Activated CD8-positive, alpha-beta T cell treated with anti-CD3 and anti-CD28 coated beads for 36 hours (primary cell): ENCODE measurements at regions of chr11 and their contacts with region 1.

Region 1: DNA sequence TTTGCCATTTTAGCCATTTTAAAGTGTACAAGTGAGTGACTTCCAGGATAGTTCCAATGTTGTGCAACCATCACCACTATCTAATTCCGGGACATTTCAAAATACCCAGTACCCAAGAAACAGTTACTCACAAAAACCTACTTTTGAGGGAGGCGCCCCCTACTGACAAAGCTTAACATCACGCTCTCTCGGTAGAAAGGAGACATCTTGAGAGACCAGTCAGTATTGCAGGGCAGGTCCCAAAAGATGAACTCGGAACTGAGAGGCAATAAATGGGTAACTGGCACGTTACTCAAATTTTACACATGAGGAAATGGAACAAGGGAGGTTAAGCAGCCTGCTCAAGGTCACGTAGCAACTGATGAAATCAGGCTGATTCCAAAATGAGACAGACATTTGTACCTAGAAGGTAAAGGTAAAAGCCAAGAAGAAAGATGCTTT is 50.0 kb upstream of the POU2AF1 start:
- DNase-seq: peak; percentile 84
- ATAC-seq: peak; percentile 88
- H3K4me3 Mint-ChIP-seq: no peak overlapping the region
- H3K27ac Mint-ChIP-seq: no peak overlapping the region
- H3K4me1 Mint-ChIP-seq: no peaks in the 10 kb centered on the region
- H3K27me3 Mint-ChIP-seq: peaks cover 2% of the 10 kb centered on the region
- CTCF ChIP-seq: peak; percentile 92

Region 2: GRCh38 chr11:110928391-110928790 is 500.7 kb before region 1 on chr11:
- CTCF ChIA-PET with region 1: no interaction called
- POLR2A ChIA-PET with region 1: no interaction called
- intact Hi-C with region 1: no loop called
- DNase-seq: no peak
- ATAC-seq: no peak
- H3K4me3 Mint-ChIP-seq: no peak overlapping the region
- H3K27ac Mint-ChIP-seq: no peak overlapping the region
- H3K4me1 Mint-ChIP-seq: no peaks in the 10 kb centered on the region
- H3K27me3 Mint-ChIP-seq: no peaks in the 10 kb centered on the region
- CTCF ChIP-seq: no peak

Region 3: GRCh38 chr11:111327908-111328624 is 101.0 kb before region 1 on chr11:
- CTCF ChIA-PET with region 1: interaction called, 12 read pairs
- POLR2A ChIA-PET with region 1: no interaction called
- intact Hi-C with region 1: no loop called
- DNase-seq: no peak
- ATAC-seq: peak; percentile 10
- H3K4me3 Mint-ChIP-seq: no peak overlapping the region
- H3K27ac Mint-ChIP-seq: no peak overlapping the region
- H3K4me1 Mint-ChIP-seq: peaks cover 2% of the 10 kb centered on the region
- H3K27me3 Mint-ChIP-seq: no peaks in the 10 kb centered on the region
- CTCF ChIP-seq: no peak

Region 4: DNA sequence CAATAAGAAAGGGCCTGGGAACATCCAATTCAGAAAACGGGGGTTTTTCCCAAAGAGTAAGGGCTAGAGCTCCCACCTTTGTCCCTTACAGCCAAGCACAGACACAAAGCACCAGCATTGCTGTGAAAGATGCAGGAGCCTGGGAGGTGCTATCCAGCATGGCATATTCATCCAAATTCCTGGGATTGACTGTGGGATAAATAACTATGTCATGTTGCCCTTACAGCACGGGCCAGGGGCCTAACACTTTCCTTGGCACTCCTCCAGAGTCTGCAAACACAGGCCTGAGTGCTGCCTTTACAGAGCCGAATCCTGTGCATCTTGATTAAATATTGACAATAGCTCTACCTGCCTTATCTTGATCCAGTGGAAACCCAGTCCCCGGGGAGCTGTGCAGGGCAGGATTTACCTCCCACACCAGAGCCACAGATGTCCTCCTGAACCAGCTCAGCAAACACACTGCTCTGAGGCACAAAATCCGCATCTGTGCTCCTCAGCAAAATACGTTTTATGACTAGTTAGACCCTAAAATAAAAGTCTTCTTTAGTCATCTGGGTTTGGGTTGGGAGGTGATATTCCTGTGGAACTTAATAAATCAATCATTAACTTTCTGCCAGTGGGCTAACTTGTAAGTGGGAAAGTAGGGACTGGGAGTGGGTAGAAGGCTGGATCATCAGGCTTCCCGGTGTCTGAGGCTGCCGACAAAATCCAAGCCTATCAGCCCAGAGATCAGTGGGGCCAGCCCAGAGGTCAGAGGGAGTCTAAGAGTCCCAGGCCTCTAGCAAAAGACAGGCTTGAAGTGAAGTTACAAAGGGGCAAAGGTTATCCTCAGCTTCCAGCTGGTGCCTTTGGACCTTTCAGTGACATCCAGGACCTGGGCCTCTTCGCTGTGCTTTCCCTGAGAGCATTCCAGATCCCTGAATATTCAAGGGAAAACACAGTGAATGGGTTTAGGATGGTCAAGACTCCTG is 94.3 kb before region 1 on chr11:
- CTCF ChIA-PET with region 1: interaction called, 12 read pairs
- POLR2A ChIA-PET with region 1: no interaction called
- intact Hi-C with region 1: no loop called
- DNase-seq: no peak
- ATAC-seq: no peak
- H3K4me3 Mint-ChIP-seq: no peak overlapping the region
- H3K27ac Mint-ChIP-seq: no peak overlapping the region
- H3K4me1 Mint-ChIP-seq: no peaks in the 10 kb centered on the region
- H3K27me3 Mint-ChIP-seq: no peaks in the 10 kb centered on the region
- CTCF ChIP-seq: no peak

Region 5: DNA sequence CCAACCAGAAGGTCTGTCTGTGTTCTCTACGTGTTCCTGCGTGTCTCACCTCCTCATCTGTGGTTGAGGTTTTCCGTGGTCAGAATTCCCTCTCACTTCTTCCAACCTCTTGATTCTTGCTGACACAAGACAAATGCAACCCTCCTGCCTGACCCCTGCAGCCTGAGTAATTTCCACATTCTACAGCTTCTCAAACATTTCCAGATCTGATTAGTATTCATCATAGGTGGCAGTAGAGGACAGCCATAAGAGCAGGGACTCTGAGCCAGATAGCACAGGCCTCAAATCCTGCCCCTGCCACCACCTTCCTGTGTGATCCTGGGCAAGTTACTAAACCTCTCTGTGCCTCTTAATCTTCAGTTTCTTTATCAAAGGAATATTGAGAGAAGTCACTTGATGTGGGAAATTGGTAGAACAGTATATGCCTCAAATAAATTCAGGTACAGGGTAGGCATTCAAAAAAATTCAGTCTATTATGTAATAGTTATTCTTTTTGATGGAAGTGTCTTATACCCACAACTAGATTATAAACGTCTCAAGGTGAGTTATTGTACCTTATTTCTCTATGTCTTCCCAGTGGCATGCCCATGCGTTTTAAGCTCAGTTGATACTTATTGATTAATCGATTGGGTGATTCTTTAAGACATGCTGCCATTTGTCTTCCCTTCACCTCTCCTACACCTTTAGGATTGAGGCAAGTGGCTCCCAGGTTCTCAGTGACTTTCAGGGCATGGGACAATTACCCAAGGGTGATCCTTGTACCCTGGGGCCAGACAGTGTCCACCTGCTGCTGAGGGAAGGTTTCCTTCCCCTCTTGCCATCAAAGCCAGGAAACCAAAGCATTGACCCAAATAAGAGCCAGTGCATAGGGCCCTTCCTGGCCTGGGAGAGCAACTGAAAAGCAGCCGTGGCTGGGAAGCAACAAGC is 69.6 kb before region 1 on chr11:
- CTCF ChIA-PET with region 1: interaction called, 32 read pairs
- POLR2A ChIA-PET with region 1: no interaction called
- intact Hi-C with region 1: loop called (anchors 5 kb)
- DNase-seq: peak; percentile 26
- ATAC-seq: peak; percentile 81
- H3K4me3 Mint-ChIP-seq: no peak overlapping the region
- H3K27ac Mint-ChIP-seq: no peak overlapping the region
- H3K4me1 Mint-ChIP-seq: no peaks in the 10 kb centered on the region
- H3K27me3 Mint-ChIP-seq: no peaks in the 10 kb centered on the region
- CTCF ChIP-seq: no peak

Region 6: DNA sequence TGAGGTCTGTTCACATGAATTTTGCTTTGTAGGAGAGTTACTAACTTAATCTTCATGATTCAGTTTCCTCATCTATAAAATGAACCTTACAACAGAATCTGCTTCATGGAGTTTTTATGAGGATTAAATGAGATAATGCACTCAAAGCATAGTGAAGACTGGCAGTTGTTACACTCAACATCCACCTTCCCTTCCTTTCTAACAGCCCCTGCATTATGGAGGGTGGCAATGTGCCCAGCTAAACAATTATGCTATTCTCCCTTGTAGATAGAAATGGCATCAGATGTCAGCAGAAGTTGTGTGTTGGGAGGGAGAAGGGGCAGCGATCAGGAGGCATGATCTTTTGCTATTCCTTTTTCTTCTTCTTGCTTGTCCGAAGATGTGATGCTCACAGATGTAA is 56.5 kb before region 1 on chr11:
- CTCF ChIA-PET with region 1: interaction called, 10 read pairs
- POLR2A ChIA-PET with region 1: no interaction called
- intact Hi-C with region 1: no loop called
- DNase-seq: no peak
- ATAC-seq: no peak
- H3K4me3 Mint-ChIP-seq: no peak overlapping the region
- H3K27ac Mint-ChIP-seq: peak overlapping the region; percentile 44
- H3K4me1 Mint-ChIP-seq: peaks cover 42% of the 10 kb centered on the region
- H3K27me3 Mint-ChIP-seq: no peaks in the 10 kb centered on the region
- CTCF ChIP-seq: no peak

Region 7: DNA sequence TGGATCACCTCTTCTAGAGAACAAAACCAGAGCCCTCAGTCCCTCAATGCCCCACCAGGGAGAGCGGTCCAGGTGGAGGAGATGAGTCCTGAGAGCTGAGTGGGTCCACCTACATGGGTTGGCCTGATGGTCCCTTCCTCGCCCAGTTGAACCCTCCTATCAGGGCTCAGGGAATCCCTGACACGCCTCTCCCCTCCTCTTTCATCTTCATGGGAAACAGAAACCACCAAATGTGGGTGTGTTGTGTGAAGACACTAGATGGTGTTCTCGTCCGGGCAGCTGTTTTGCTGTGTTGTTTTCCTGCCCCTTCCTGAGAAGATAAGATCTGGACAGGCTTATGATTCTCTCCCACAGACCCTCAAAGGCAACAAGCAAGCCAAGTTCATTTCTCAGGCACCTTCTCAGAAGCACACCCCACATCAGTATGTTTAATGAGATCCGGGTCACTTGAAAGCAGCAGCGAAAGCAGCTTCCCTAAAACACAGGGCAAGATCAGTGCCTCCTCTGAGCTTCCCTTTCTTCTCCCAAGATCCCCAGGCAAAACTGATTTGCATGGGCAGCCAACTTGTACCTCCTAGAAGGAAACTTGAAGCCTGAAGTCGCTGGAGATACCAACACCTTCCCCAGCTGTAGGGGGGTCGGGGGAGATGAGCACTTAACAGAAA is 14.7 kb before region 1 on chr11:
- CTCF ChIA-PET with region 1: interaction called, 54 read pairs
- POLR2A ChIA-PET with region 1: interaction called, 3 read pairs
- intact Hi-C with region 1: no loop called
- DNase-seq: peak; percentile 31
- ATAC-seq: peak; percentile 25
- H3K4me3 Mint-ChIP-seq: peak overlapping the region; percentile 7
- H3K27ac Mint-ChIP-seq: peak overlapping the region; percentile 77
- H3K4me1 Mint-ChIP-seq: peaks cover 51% of the 10 kb centered on the region
- H3K27me3 Mint-ChIP-seq: no peaks in the 10 kb centered on the region
- CTCF ChIP-seq: no peak

Region 8: DNA sequence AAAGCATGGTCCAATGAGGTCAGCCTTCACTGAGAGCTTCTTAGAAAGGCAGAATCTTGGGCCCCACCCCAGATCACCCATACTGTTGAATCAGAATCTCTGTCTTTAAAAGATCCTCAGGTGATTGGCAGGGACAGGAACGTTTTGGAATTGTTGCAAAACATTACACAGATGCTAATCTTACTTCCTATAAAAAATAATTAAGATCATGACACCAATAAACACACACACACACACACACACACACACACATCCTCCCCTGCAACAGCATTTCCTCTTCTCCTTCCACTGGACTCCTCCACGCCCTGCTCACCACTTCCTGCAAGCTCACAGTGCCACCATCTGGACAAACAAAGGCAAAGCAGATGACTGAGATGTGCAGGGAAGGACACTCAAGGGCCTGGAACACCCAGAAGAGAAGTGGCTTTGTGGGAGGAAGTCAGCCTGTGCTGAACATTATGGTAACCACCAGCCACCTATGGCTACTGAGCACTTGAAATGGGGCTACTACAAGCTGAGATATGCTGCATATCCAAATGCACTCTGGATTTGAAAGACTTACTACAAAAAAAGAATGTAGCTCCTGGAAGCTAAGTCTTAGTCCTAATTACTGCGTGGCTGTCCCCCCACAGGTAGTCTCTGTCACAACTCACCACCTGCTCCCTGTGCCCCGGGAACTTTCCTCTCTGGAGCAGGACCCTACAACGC is 17.5 kb after region 1 on chr11:
- CTCF ChIA-PET with region 1: interaction called, 78 read pairs
- POLR2A ChIA-PET with region 1: no interaction called
- intact Hi-C with region 1: no loop called
- DNase-seq: peak; percentile 80
- ATAC-seq: peak; percentile 100
- H3K4me3 Mint-ChIP-seq: no peak overlapping the region
- H3K27ac Mint-ChIP-seq: peak overlapping the region; percentile 9
- H3K4me1 Mint-ChIP-seq: peaks cover 15% of the 10 kb centered on the region
- H3K27me3 Mint-ChIP-seq: no peaks in the 10 kb centered on the region
- CTCF ChIP-seq: peak; percentile 67

Region 9: GRCh38 chr11:111465400-111465799 is 36.3 kb after region 1 on chr11:
- CTCF ChIA-PET with region 1: no interaction called
- POLR2A ChIA-PET with region 1: no interaction called
- intact Hi-C with region 1: no loop called
- DNase-seq: no peak
- ATAC-seq: no peak
- H3K4me3 Mint-ChIP-seq: no peak overlapping the region
- H3K27ac Mint-ChIP-seq: no peak overlapping the region
- H3K4me1 Mint-ChIP-seq: peaks cover 13% of the 10 kb centered on the region
- H3K27me3 Mint-ChIP-seq: peaks cover 6% of the 10 kb centered on the region
- CTCF ChIP-seq: no peak

Region 10: DNA sequence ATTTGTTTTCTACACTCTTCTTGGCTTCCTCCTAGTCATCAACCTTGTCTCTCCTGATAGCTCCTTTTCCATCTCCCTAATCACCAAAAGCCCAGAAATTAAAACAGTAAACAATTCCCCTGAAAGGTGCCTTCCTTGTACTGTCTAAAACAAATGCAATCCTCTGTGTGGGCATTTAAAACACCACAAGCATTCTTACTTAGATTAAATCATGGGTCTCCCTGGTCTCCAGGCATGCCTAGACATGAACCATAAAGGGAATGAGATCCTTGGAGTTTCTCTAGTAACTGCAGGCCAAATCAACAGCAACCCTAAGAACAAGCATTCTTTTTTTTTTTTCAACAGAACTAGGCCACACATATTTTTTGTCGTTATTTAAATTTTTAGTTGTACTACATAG is 81.2 kb after region 1 on chr11:
- CTCF ChIA-PET with region 1: no interaction called
- POLR2A ChIA-PET with region 1: no interaction called
- intact Hi-C with region 1: no loop called
- DNase-seq: no peak
- ATAC-seq: no peak
- H3K4me3 Mint-ChIP-seq: no peak overlapping the region
- H3K27ac Mint-ChIP-seq: no peak overlapping the region
- H3K4me1 Mint-ChIP-seq: peaks cover 14% of the 10 kb centered on the region
- H3K27me3 Mint-ChIP-seq: peaks cover 47% of the 10 kb centered on the region
- CTCF ChIP-seq: no peak